Tibial artery (tissue), 4 donors: ENCODE measurements at regions of chr6 and their contacts with region 1.

Region 1: DNA sequence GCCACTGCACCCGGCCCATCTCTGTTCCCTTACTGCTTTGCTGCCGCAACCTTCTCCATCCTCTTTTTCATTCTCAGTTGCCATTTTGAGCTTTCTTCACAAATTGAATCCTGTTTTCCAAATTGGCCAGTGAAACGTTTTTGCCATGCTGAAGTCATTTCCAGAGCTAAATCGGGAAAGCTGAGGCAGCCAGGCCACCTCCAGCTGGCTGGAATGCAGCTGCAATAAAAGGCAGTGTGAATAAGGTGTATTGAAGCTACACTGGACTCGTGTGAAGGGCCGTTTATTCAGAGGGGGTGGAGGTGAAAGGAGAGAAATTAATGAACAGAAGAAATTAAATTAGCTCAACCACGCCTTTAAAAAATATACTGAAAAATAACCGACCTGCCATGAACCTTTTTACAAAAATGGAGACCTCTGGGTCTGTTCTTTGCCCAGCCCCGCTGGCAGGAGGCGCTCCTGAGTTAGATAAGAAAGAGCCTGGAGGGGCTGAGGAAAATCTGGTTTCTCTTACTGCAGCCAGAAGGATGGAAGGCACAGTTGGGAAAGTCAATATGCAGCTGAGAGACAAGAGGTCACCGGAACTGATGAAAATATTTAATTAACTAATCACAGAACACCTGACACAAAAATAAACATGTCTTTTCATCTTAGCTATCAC is 283.9 kb downstream of the FOXC1 start:
- DNase-seq: no peak
- H3K4me3 ChIP-seq: no peak overlapping the region
- H3K27ac ChIP-seq: peak overlapping the region; percentile 59 to 60
- H3K4me1 ChIP-seq: peaks cover 0 to 45% (median 14%) of the 10 kb centered on the region in 4 donors
- H3K27me3 ChIP-seq: no peaks in the 10 kb centered on the region
- CTCF ChIP-seq: peak; percentile 12 to 28

Region 2: DNA sequence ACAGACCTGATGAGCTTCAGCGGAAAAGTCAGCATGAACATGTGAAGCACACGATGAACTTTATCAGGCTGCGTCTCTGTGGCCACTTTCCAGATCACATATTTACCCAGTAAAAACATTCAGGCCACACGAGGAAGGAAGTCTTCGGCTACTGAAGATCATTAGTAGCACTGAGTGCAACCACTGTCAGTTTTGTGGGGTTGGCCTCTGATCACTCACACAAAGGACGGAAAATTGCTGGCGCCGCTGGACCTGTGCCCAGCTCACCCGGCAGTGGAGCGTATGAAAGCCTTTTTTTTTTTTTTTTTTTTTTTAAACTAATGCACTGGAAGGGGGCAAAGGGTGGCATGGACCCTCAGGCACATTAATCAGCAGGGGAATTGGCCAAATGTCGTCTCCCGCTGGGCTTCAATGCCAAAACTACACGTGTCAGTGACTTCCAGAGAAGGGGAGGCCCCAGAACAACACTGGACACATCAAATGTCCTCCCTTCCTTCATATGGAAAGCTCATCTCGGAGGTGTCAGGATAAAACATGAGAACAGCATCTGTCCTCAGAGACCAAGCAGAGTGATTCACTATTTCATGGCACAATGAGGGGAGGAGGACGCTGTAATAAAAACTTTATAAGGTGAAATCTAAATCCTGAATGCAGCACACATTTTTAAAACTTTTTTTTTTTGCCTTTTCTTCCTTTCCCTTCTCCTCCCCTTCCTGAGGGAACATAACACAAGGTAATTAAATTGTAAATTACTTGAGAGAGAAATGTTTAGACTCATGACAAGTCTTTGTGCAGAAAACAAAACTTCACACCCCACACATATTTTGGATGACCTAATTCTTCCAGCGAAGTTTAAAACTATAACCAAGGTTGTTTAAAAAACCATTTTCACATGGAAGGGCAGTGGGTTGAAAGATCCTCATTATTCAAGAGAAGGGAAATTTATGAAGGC is 60.5 kb before region 1 on chr6:
- intact Hi-C with region 1: loop called (anchors 10 kb)
- DNase-seq: peak in 1 of 2 donors; percentile 47
- H3K4me3 ChIP-seq: peak overlapping the region; percentile 37 to 45
- H3K27ac ChIP-seq: peak overlapping the region; percentile 56 to 57
- H3K4me1 ChIP-seq: peaks cover 0 to 24% (median 12%) of the 10 kb centered on the region in 4 donors
- H3K27me3 ChIP-seq: no peaks in the 10 kb centered on the region
- CTCF ChIP-seq: no peak